ENCODE measurements at regions of chr2 and their contacts with region 1.

Region 1: DNA sequence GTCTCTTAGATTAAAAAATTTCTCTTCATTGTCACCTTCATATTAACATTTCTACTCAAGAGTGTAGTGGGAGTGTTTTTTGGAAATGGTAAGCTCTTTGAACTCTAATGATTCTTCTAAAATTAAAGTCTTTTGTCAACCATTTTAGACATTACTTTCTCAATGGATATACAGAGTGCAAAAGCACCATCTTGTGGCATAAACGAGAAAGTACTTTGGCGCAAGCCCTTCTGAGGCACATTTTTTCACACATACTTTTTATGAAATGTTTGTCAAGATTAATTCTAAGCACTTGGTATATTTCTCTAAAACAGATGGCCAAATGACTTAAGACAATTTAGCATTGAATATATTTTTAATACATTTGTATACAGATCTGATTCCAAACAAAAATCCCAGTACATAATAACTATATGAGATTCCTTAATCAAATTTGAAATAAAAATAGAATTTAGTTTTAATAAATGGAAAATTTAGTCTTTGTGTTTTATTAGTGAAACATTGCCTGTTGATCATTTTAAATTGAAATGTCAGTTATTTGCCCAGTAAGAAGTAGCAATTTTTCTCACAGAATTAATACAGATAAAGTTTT is 63.3 kb upstream of the GALNT5 start:
- DNase-seq: peak; percentile 67
- H3K4me3 Mint-ChIP-seq: no peak overlapping the region
- H3K27ac Mint-ChIP-seq: peak overlapping the region; percentile 80
- H3K4me1 Mint-ChIP-seq: peaks cover 12% of the 10 kb centered on the region
- H3K27me3 Mint-ChIP-seq: no peaks in the 10 kb centered on the region
- CTCF ChIP-seq: peak; percentile 61

Region 2: GRCh38 chr2:155368934-155369333 is 1825.3 kb before region 1 on chr2:
- CTCF ChIA-PET with region 1: interaction called, 7 read pairs
- POLR2A ChIA-PET with region 1: no interaction called
- intact Hi-C with region 1: loop called (anchors 2 kb)
- DNase-seq: peak; percentile 39
- H3K4me3 Mint-ChIP-seq: no peak overlapping the region
- H3K27ac Mint-ChIP-seq: no peak overlapping the region
- H3K4me1 Mint-ChIP-seq: no peaks in the 10 kb centered on the region
- H3K27me3 Mint-ChIP-seq: peaks cover 18% of the 10 kb centered on the region
- CTCF ChIP-seq: peak; percentile 30

Region 3: DNA sequence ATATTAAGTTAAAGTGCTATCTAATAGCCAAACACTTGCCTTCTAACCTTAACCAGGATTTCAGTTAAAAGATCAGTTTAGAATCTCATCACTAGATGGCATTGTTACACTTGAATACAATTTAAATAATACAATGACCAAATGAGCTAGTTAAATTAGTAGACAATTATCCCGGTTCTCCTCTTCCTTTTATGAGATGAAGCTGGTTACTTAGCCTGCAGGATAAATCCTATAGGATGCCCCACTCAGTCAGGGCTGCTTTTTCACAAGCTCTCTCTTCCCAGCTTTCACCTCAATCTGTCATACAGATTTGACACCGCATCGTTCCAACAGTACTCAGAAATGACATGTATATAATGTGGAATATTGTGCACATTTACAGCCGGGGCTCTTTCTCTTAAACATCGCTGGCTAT is 1816.9 kb before region 1 on chr2:
- CTCF ChIA-PET with region 1: interaction called, 17 read pairs
- POLR2A ChIA-PET with region 1: no interaction called
- intact Hi-C with region 1: loop called (anchors 2 kb)
- DNase-seq: peak; percentile 47
- H3K4me3 Mint-ChIP-seq: no peak overlapping the region
- H3K27ac Mint-ChIP-seq: no peak overlapping the region
- H3K4me1 Mint-ChIP-seq: no peaks in the 10 kb centered on the region
- H3K27me3 Mint-ChIP-seq: no peaks in the 10 kb centered on the region
- CTCF ChIP-seq: peak; percentile 41

Region 4: GRCh38 chr2:156892467-156893281 is 301.5 kb before region 1 on chr2:
- CTCF ChIA-PET with region 1: interaction called, 3 read pairs
- POLR2A ChIA-PET with region 1: no interaction called
- intact Hi-C with region 1: loop called (anchors 1 kb)
- DNase-seq: peak; percentile 80
- H3K4me3 Mint-ChIP-seq: peak overlapping the region; percentile 69
- H3K27ac Mint-ChIP-seq: peak overlapping the region; percentile 6
- H3K4me1 Mint-ChIP-seq: peaks cover 20% of the 10 kb centered on the region
- H3K27me3 Mint-ChIP-seq: no peaks in the 10 kb centered on the region
- CTCF ChIP-seq: peak; percentile 39

Region 5: DNA sequence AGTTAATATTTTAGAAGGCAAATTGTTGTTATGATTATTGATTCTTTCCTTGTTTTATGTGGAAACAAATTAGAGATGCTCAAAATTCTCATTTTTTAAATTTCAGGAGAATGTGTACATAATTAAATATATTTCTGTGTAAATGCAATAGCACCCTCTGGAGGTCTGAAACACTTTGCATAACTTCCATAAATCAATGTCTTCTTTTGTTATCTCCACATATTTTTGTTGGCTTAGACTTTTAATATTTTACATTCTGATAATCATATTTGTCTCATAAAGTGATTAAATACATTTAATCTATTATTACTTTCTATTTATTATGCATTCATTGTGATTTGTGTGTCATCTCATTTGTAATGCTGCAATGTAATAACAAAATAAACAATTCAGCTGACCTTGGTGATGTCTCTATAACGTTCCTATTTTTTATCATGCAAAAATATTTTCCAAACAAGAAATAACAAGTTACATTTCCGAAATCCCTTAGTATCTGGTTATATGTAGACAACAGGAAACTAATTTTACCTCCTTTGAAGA is 138.5 kb before region 1 on chr2:
- CTCF ChIA-PET with region 1: interaction called, 8 read pairs
- POLR2A ChIA-PET with region 1: no interaction called
- intact Hi-C with region 1: loop called (anchors 1 kb)
- DNase-seq: peak; percentile 40
- H3K4me3 Mint-ChIP-seq: peak overlapping the region; percentile 41
- H3K27ac Mint-ChIP-seq: peak overlapping the region; percentile 80
- H3K4me1 Mint-ChIP-seq: peaks cover 19% of the 10 kb centered on the region
- H3K27me3 Mint-ChIP-seq: no peaks in the 10 kb centered on the region
- CTCF ChIP-seq: peak; percentile 41

Region 6: DNA sequence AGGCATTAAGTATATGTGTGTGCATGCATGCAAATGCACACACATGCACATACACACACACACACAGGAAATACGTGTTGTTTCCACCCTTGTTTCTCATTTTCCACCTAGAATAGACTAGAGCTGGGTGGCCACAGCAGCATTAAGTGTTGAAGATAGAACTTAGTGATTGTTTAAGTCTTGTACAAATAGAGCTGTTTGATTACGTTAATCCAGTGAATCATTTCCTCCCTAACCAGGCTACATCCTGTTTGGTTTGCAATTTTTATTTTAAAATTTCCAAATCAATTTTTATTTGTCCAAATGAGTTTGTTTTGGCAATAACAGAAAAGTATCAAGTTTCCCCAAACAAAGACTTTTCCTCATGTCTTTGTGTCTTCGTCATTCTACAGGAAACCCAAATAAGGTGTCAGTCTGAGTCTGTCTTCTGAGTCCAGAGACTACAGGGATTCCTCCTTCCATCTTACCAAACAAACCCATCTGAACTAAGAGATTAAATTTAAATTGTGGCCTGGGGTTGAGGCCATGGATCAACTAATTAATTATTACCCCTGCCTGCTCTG is 11.3 kb before region 1 on chr2:
- CTCF ChIA-PET with region 1: interaction called, 26 read pairs
- POLR2A ChIA-PET with region 1: interaction called, 3 read pairs
- intact Hi-C with region 1: no loop called
- DNase-seq: peak; percentile 91
- H3K4me3 Mint-ChIP-seq: peak overlapping the region; percentile 29
- H3K27ac Mint-ChIP-seq: peak overlapping the region; percentile 92
- H3K4me1 Mint-ChIP-seq: peaks cover 19% of the 10 kb centered on the region
- H3K27me3 Mint-ChIP-seq: no peaks in the 10 kb centered on the region
- CTCF ChIP-seq: no peak